GM18951 (cell line): ENCODE measurements at regions of chr12 and their contacts with region 1.

Region 1: DNA sequence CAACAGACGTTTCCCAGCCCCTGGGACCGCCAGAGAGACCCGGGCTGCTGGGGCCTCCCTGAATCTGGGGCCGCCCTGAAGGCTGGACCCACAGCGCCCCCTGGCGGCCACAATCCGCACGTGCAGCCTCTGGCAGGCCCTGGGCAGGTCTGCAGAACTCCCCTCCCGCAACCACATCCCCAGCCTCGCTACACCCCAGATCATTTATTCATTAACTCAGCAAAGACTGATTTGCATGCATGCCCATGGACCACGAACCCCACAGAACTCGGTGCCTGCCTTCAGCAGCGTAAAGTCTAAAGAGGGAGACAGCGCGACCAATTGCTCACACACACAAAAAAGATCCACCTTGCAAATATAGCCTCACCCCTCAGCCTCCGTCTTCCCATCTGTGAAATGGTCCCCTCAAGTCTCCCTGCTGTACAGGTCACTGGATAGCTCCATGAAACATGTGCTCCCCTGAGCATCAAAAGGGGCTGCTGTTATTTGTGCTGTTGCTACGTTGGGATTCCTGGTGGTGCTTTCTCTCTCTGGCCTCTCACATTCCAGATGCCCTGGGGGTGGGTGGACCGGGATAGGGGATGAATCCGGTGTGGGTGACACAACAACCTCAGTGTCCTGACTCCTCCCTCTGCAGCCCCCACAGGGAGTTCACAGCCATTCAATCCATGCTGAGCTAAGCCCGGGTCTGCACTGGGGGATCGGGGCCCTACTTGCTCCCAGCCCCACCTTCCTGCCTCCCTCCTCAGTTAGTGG is 96.4 kb downstream of the SCARB1 start:
- POLR2A ChIP-seq: no peak

Region 2: GRCh38 chr12:124044809-124045321 is 722.4 kb before region 1 on chr12:
- in situ Hi-C with region 1: loop called (anchors 10 kb)
- POLR2A ChIP-seq: no peak

Region 3: GRCh38 chr12:124369055-124369900 is 398.0 kb before region 1 on chr12:
- in situ Hi-C with region 1: loop called (anchors 25 kb)
- POLR2A ChIP-seq: no peak

Region 4: GRCh38 chr12:124567661-124568373 is 199.4 kb before region 1 on chr12:
- in situ Hi-C with region 1: loop called (anchors 25 kb)
- POLR2A ChIP-seq: peak; percentile 14

Region 5: DNA sequence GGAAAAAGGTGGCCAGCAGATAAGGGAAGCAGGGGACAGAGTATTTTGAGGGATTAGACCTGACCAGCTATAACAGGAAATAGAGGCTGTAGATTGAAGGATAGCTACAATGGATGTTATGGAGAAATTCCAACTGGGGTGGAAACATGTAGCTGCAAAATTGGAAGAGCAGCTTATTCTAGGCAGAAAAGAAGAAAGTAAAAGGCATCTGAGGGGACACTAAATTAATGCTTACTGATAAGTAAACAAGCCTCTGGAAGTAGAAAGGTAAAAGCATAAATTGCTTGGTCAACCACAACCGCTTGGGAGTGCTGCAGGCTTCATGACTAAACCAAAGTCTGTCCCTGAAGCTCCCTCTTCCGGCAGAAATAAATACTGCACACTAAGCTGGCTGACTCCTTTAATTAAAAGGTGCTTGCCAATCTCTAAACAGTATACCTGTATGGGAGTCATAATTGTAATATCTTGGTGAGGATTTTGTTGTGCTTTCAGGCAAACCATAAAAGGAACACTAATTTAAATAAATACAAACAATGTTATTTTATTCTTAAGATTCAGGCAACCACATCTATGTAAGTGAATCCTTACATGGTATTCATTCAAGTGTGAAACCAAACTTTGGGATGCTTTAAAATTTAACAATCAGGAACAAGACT is 139.5 kb after region 1 on chr12:
- in situ Hi-C with region 1: loop called (anchors 10 kb)
- POLR2A ChIP-seq: no peak